OCI-LY7 (cell line): ENCODE measurements at regions of chr11 and their contacts with region 1.

Region 1: DNA sequence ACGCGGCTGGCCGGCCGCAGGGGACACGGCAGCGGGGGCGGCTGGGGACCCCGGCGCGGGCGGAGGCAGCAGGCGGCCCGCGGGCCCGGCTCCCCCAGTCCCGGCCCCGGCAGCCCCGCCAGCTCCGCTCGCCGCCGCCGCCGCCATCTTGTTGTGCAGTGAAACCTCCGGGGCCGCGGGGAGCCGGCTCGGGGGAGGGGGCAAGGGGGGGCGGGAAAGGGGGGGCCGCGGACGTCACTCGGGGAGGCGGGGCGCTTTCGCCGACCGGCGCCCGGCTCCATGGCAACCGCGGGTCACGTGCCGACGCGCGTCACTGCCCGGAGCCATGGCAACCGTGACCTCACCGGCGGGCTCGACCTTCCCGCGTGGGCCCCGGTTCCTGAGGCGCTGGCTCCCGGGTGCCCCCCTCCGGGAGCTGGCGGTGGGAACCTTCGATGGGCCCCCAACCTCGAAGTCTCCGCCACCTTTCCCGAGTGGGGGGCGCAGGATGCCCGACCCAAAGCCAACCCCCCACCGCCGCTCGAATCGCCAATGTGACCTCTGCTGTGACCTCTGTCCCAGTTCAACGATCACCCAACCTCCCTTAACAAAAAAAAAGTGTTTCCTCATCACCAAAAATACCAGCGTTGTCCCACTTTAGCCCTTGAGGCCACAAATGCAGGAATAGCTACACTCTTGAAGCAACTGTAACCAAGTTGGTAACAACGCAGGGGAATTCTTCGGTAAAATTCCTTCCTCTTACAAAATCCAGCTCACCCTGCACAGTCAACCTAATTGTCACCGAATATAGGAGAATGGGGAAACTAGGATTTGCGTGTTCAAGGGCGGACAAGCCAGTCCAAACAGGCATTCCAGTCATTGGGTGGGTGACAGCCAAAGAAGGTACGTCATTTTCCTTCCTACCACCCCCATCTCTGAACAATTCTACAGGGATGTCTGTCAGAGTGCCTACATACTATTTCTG is at the start of gene SIK3:
- DNase-seq: peak; percentile 96
- H3K4me3 ChIP-seq: peak within 1 kb of the TSS; percentile 86
- H3K27ac ChIP-seq: peak within 1 kb of the TSS; percentile 68
- H3K4me1 ChIP-seq: peaks cover 37% of the 10 kb centered on the region
- CTCF ChIP-seq: peak; percentile 63
- total RNA-seq, gene SIK3: 29.3 and 37.2 TPM in 2 replicates

Region 2: GRCh38 chr11:116879800-116880625 is 218.5 kb before region 1 on chr11:
- CTCF ChIA-PET with region 1: interaction called, 5 read pairs
- POLR2A ChIA-PET with region 1: no interaction called
- intact Hi-C with region 1: loop called (anchors 2 kb)
- DNase-seq: peak; percentile 81
- H3K4me3 ChIP-seq: no peak overlapping the region
- H3K27ac ChIP-seq: no peak overlapping the region
- H3K4me1 ChIP-seq: peaks cover 7% of the 10 kb centered on the region
- CTCF ChIP-seq: peak; percentile 96

Region 3: DNA sequence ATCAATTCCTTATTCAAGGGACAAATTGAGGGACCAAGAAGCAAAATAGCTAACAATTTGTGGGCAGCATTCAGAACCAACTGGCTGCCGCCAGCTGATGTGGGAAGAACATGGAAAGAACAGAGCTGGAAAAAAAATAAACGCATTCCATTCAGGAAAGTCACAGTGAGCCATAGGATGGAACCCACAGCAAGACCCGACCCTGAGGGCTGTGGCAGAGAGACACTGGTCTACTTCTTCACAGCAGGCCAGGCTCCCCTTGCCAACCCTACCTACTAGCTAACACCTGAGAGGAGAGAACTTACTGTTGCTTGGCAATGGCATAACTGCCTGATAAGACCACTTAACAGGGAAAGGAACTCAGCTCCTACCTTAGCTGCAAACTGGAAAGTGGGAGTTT is 137.6 kb before region 1 on chr11:
- CTCF ChIA-PET with region 1: no interaction called
- POLR2A ChIA-PET with region 1: interaction called, 3 read pairs
- intact Hi-C with region 1: loop called (anchors 10 kb)
- DNase-seq: peak; percentile 14
- H3K4me3 ChIP-seq: no peak overlapping the region
- H3K27ac ChIP-seq: no peak overlapping the region
- H3K4me1 ChIP-seq: peaks cover 67% of the 10 kb centered on the region
- CTCF ChIP-seq: no peak

Region 4: DNA sequence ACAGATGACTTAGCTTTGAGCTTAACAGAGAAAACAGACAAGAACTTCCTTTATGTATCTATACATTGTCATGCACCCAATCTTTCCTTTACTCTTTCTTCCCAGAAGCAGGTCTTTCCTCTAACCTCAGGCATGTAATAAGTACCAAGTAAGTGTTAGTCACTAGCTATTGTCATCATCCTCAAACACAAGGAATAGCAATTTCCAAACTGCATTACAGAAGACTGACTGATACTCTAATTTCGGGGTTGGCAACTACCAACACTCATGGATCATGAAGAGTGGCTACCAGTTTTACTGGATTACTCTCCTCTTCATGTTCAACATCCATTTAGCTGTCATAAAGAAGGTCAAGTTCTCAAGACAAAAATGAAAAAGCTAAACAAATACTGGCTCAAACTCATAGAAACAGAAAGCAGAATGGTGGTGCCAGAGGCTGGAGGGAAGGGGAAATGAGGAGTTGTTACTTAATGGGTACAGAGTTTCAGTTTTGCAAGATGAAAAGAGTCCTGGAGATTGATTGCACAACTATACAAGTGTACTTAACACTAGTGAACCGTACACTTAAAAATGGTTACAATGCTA is 111.9 kb before region 1 on chr11:
- CTCF ChIA-PET with region 1: no interaction called
- POLR2A ChIA-PET with region 1: interaction called, 3 read pairs
- intact Hi-C with region 1: loop called (anchors 10 kb)
- DNase-seq: peak; percentile 30
- H3K4me3 ChIP-seq: peak overlapping the region; percentile 18
- H3K27ac ChIP-seq: peak overlapping the region; percentile 12
- H3K4me1 ChIP-seq: peaks cover 36% of the 10 kb centered on the region
- CTCF ChIP-seq: no peak

Region 5: DNA sequence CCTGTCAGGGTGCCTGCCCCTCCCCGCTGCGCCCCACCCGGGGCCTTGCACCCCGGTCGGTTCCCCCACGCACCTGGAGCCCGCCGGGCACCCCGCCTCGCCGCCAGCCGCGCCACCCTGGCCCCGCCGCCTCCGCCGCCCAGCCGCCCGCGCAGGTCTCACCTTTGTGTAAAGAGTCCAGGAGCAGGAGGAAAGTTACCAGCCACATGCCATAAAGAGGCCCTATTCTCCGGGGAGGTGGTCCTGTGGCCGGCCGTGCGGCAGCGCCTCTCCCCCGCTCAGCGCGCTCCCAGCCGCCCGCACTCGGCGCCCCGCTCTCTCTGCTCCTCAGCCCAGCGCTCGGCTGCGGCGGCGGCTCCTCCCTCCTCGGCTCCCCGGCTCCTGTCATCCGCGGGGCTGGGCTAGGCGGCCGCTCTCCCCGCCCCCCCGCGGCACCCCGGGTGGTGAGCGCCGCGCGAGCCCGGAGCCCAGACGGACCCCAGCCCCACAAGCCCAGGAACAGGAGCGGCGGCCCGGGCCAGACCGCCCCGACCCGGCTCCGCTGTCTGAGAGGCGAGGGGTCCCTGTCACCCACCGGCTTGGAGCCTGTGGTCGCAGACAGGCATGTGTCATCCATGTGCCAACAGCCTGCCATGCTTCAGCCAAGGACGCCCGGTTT is 698.5 kb after region 1 on chr11 and contains the start of gene DSCAML1:
- CTCF ChIA-PET with region 1: no interaction called
- POLR2A ChIA-PET with region 1: no interaction called
- intact Hi-C with region 1: no loop called
- DNase-seq: no peak
- H3K4me3 ChIP-seq: no peak within 1 kb of the TSS
- H3K27ac ChIP-seq: no peak within 1 kb of the TSS
- H3K4me1 ChIP-seq: no peaks in the 10 kb centered on the region
- CTCF ChIP-seq: no peak
- total RNA-seq, gene DSCAML1: not detected in 2 replicates